ENCODE measurements at regions of chr3 and their contacts with region 1.

Region 1: GRCh38 chr3:9067352-9067975 is 104.2 kb upstream of the RAD18 start:
- DNase-seq: peak; percentile 44
- ATAC-seq: peak; percentile 86
- H3K4me3 ChIP-seq: no peak overlapping the region
- H3K27ac ChIP-seq: no peak overlapping the region
- H3K4me1 ChIP-seq: no peaks in the 10 kb centered on the region
- H3K27me3 ChIP-seq: no peaks in the 10 kb centered on the region; a peak in 1 of 5 replicates
- CTCF ChIP-seq: peak; percentile 88
- EP300 ChIP-seq: no peak
- POLR2A ChIP-seq: no peak
- RAD21 ChIP-seq: peak; percentile 76

Region 2: GRCh38 chr3:8938021-8938420 is 129.4 kb before region 1 on chr3:
- CTCF ChIA-PET with region 1: no interaction called
- POLR2A ChIA-PET with region 1: no interaction called
- in situ Hi-C with region 1: no loop called
- intact Hi-C with region 1: loop called (anchors 1 kb)
- DNase-seq: peak; percentile 45
- ATAC-seq: peak; percentile 77
- H3K4me3 ChIP-seq: no peak overlapping the region
- H3K27ac ChIP-seq: no peak overlapping the region
- H3K4me1 ChIP-seq: no peaks in the 10 kb centered on the region
- H3K27me3 ChIP-seq: no peaks in the 10 kb centered on the region
- CTCF ChIP-seq: no peak
- EP300 ChIP-seq: no peak
- POLR2A ChIP-seq: no peak
- RAD21 ChIP-seq: no peak

Region 3: DNA sequence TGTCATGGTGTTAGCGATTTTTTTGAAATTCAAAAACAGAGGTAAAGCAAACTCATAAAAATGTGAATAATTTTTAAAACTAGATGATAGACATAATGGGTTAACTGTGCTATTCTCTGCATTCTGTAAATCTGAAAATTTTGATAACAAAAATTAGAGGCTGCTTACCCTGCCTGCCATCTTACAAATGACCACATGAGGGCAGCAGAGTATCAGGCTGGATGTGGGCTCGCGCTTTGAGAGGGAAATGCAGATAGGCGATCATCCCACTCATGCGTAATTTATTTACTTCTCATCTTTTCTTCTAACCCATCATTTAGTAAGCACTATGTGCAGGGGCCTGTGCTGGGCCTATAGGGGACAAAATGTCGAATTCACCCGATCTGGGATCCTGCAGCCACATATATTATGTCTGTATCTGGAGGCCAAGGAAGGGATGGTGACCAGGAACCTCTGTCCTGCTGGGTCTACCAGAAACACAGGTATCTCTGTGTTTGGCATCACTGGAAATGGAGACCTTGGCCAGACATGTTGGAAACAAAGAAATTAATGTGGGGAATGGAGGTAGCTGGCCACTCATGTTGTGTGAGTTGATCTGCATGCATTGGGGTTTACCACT is 96.4 kb before region 1 on chr3:
- CTCF ChIA-PET with region 1: interaction called, 45 read pairs
- POLR2A ChIA-PET with region 1: no interaction called
- in situ Hi-C with region 1: loop called (anchors 5 kb)
- intact Hi-C with region 1: loop called (anchors 1 kb)
- DNase-seq: peak; percentile 54
- ATAC-seq: peak; percentile 52
- H3K4me3 ChIP-seq: no peak overlapping the region
- H3K27ac ChIP-seq: no peak overlapping the region
- H3K4me1 ChIP-seq: peaks cover 38% of the 10 kb centered on the region
- H3K27me3 ChIP-seq: no peaks in the 10 kb centered on the region; a peak in 1 of 5 replicates
- CTCF ChIP-seq: peak; percentile 89
- EP300 ChIP-seq: no peak
- POLR2A ChIP-seq: no peak
- RAD21 ChIP-seq: peak; percentile 88

Region 4: DNA sequence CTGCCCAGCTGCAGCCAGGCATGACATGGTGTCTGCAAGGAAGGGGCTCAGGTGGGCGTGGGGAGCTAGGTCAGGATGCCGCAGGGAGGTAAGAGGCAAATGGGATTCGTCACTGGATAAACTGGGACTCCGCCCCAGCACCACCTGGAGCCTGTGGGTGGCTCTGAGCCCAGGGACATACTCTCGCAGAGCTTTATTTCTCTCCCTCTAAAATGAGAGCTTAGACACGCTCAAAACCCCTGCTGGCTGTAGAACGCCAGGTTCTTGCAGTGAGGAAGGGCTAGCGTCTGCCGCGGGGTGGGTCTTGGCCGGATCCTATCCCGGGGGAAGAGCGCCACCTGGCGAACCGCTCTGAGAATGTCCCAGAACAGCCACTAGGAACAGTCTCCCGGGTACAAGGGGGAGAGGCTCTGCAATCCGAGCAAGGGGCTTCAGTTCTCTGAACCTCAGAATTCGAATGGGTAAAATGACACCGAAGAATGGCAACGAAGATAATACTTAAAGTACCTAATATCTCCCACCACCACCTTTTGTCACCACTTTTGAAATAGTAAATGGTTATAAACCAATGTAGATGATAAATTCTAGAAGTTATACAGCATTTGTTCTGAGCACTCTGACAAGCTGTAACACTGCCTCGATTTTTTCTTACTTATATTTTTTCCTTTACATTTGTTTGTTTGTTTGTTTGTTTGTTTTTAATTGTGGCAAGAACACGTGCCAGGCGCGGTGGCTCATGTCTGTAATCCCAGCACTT is 235.1 kb after region 1 on chr3:
- CTCF ChIA-PET with region 1: interaction called, 4 read pairs
- POLR2A ChIA-PET with region 1: no interaction called
- in situ Hi-C with region 1: no loop called
- intact Hi-C with region 1: loop called (anchors 1 kb)
- DNase-seq: peak; percentile 64
- ATAC-seq: peak; percentile 98
- H3K4me3 ChIP-seq: no peak overlapping the region
- H3K27ac ChIP-seq: no peak overlapping the region
- H3K4me1 ChIP-seq: no peaks in the 10 kb centered on the region
- H3K27me3 ChIP-seq: peaks cover 0 to 1% of the 10 kb centered on the region in 2 experiments; a peak in 2 of 5 replicates
- CTCF ChIP-seq: peak; percentile 94
- EP300 ChIP-seq: no peak
- POLR2A ChIP-seq: no peak
- RAD21 ChIP-seq: peak; percentile 95